ENCODE measurements at regions of chr13 and their contacts with region 1.

Region 1: GRCh38 chr13:49792550-49793324 is at the start of gene KPNA3:
- DNase-seq: peak; percentile 96
- H3K4me3 Mint-ChIP-seq: peak within 1 kb of the TSS; percentile 95
- H3K27ac Mint-ChIP-seq: peak within 1 kb of the TSS; percentile 97
- H3K4me1 Mint-ChIP-seq: peaks cover 32% of the 10 kb centered on the region
- H3K27me3 Mint-ChIP-seq: peaks cover 4% of the 10 kb centered on the region
- total RNA-seq, gene KPNA3: 34.9 to 36.1 TPM

Region 2: DNA sequence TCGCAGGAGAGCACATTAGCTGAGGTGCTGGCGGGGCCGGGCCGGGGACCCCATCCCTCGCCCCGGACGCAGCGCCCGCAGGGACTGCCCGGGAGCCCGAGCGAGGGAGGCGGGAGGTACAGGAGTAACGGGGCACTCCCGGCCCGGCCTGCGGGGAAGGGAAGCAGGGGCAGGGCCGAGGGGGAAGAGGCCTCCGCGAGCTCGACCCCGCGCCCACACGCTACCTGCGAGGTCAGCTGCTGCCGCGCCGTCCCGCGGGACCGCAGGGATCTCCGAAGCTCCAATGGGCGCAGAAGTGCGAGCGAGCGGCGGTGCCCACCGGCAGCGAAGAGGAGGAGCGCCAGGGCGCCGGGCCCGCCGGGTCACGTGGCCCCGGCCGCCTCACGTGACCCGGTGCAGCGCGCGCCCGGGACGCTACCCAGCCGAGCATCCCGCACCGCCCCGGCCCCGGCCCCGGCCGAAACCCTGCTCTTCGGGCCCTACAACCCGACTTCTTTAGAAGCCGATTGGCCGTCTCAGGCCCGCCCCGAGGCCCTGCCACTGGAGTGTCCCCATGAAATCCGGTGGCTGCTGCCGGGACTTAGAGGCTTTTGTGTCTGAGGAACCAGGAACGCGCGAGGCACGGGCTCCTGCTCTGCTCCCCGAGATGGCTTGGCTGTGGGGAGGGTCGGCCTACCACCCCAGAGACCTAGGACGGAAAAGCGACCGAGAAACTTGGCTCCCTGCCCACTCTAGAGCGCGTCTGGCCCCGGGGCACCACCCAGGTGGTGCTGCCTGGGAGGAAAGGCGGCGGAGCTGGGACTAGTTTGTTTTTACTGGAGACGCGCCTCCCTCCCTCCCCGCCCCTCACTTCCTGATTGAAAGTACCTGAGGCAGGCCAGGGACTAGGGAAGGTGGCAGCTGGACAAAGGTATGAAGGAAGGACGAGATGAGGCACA is 207.2 kb before region 1 on chr13 and contains the start of gene RCBTB1:
- CTCF ChIA-PET with region 1: no interaction called
- POLR2A ChIA-PET with region 1: interaction called, 11 read pairs
- DNase-seq: peak; percentile 73
- H3K4me3 Mint-ChIP-seq: peak within 1 kb of the TSS; percentile 89
- H3K27ac Mint-ChIP-seq: peak within 1 kb of the TSS; percentile 85
- H3K4me1 Mint-ChIP-seq: peaks cover 38% of the 10 kb centered on the region
- H3K27me3 Mint-ChIP-seq: no peaks in the 10 kb centered on the region
- total RNA-seq, gene RCBTB1: 18.5 to 19.0 TPM

Region 3: DNA sequence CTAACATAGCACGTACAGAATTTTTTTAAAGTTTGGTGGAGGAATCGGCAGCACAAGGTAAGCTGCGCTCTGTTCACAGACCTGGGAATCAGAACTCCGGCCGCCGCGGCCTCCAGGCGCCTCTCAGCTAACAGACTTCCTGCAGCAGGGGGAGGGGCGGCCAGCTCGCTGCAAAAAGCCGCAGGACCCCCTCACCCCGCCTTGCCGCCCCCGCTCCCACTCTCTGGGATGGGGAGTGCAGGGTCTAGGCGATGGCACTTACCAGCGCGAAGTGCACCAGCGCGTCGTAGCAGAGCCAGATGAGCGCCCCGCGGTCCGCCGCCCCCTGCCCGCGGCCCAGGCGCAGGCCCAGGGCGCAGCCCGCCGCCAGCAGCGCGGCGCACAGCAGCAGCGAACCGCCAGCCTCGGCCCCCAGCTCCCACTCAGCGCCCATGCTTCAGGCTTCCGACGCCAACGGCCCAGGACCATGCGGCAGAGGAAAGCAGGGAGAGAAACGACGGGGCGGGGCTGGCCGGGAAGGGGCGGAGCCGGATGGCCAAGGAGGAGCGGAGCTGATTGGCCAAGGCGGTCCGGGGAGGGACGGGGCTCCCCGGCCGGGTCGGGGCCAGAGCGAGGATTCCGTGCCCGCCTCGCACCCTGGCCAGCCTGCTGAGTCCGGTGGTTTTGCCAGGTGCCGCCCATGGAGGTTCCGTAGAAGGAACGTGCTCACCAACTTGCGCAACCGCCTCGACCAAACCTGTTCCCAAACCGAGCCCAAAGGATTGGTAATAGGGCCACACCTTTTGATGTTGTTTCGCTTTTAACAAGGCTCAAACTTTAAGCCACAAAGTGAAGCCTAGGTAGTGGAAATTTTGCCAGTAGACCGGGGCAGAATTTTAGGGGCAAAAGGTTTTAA is 101.5 kb before region 1 on chr13 and contains the start of gene EBPL:
- CTCF ChIA-PET with region 1: interaction called, 6 read pairs
- POLR2A ChIA-PET with region 1: interaction called, 27 read pairs
- DNase-seq: peak; percentile 91
- H3K4me3 Mint-ChIP-seq: peak within 1 kb of the TSS; percentile 85
- H3K27ac Mint-ChIP-seq: peak within 1 kb of the TSS; percentile 64
- H3K4me1 Mint-ChIP-seq: peaks cover 24% of the 10 kb centered on the region
- H3K27me3 Mint-ChIP-seq: no peaks in the 10 kb centered on the region
- total RNA-seq, gene EBPL: 27.5 to 28.1 TPM

Region 4: DNA sequence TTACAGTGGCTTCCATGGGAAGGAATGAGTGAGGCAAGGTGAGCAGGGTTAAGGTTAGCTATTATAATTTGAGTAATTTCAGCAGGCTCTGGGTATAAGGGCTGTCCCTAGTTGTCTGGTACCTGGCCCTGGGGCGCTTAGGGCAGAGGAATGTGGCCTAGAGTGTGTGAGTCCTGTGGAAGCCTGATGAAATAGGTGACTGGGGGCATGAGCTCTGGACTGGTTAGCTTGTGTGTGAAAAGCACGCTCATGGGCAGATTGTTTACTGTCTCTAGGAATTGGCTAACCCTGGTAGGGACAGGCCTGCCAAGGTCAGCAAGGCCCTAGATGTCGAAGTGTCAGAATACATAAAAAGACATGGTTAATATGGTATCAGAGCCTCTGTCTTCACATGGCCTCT is 100.9 kb after region 1 on chr13:
- CTCF ChIA-PET with region 1: no interaction called
- POLR2A ChIA-PET with region 1: no interaction called
- DNase-seq: no peak
- H3K4me3 Mint-ChIP-seq: no peak overlapping the region
- H3K27ac Mint-ChIP-seq: no peak overlapping the region
- H3K4me1 Mint-ChIP-seq: no peaks in the 10 kb centered on the region
- H3K27me3 Mint-ChIP-seq: peaks cover 2% of the 10 kb centered on the region

Region 5: GRCh38 chr13:49936085-49936940 is 143.6 kb after region 1 on chr13 and contains the start of gene SPRYD7:
- CTCF ChIA-PET with region 1: interaction called, 5 read pairs
- POLR2A ChIA-PET with region 1: interaction called, 10 read pairs
- DNase-seq: peak; percentile 96
- H3K4me3 Mint-ChIP-seq: peak within 1 kb of the TSS; percentile 91
- H3K27ac Mint-ChIP-seq: peak within 1 kb of the TSS; percentile 62
- H3K4me1 Mint-ChIP-seq: peaks cover 15% of the 10 kb centered on the region
- H3K27me3 Mint-ChIP-seq: peaks cover 3% of the 10 kb centered on the region
- total RNA-seq, gene SPRYD7: 3.9 to 4.1 TPM

Measured in activated CD4-positive, alpha-beta memory T cell treated with anti-CD3 and anti-CD28 coated beads, Interleukin-2, amount 10 ng/mL, durations not matched to agents 7 days and 5 days (primary cell).